ENCODE measurements at regions of chr9 and their contacts with region 1.

Region 1: GRCh38 chr9:102631559-102631958 is 363.6 kb upstream of the CYLC2 start:
- DNase-seq: no peak
- H3K4me3 ChIP-seq: no peak overlapping the region
- H3K27ac ChIP-seq: no peak overlapping the region
- H3K4me1 ChIP-seq: no peaks in the 10 kb centered on the region
- H3K27me3 ChIP-seq: no peaks in the 10 kb centered on the region
- CTCF ChIP-seq: no peak
- POLR2A ChIP-seq: no peak

Region 2: DNA sequence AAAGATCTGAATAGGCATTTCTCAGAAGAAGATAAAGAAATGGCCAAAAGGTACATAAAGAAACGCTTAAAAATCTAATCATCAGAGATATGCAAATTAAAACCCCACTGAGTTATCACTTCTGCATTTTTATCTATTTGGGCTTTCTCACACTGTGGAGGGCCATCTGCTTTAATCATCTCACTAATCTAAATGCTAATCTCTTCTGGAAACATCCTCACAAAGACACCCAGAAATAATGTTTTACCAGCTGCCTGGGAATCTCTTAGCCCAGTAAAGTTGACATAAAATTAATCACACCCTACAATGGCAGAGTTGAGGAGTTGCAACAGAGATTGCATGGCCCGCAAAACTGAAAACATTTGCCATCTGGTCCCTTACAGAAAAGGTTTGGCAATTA is 44.3 kb before region 1 on chr9:
- intact Hi-C with region 1: loop called (anchors 2 kb)
- DNase-seq: no peak
- H3K4me3 ChIP-seq: no peak overlapping the region
- H3K27ac ChIP-seq: no peak overlapping the region
- H3K4me1 ChIP-seq: no peaks in the 10 kb centered on the region
- H3K27me3 ChIP-seq: no peaks in the 10 kb centered on the region
- CTCF ChIP-seq: no peak
- POLR2A ChIP-seq: no peak

Measured in breast epithelium (tissue), 4 donors.